ENCODE measurements at regions of chr5 and their contacts with region 1.

Region 1: DNA sequence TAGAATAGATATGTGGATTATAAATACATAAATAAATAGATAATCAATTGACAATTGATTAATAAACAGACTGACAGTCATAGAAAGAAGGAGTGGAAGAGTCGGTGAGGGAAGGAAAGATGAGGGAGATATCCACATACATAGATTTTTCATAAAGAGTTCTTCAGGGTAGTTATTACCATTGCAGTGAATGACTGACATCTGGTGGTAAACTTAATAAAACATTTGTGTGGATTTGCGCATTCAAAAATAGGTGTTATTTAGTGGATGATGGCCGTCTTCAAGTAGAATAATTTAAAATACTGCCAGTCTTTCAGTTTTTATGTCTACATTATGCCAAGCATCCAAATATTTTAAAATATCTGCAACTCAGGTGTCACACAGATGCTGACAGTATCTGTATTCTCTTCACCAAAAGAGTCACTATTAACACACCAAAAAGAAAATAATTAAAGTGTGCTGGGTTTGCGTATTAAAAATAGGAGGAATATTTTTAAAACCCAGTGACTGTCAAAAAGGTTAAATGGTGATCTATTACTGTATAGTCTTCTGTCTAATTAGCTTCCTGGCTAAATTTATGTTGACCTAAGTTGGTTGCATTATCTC is 78.8 kb downstream of the GIN1 start:
- DNase-seq: no peak
- H3K4me3 ChIP-seq: no peak overlapping the region
- H3K27ac ChIP-seq: no peak overlapping the region
- H3K4me1 ChIP-seq: no peaks in the 10 kb centered on the region
- H3K27me3 ChIP-seq: no peaks in the 10 kb centered on the region
- CTCF ChIP-seq: peak in 4 of 5 experiments; percentile 28 to 50 (median 36)
- EP300 ChIP-seq: no peak
- POLR2A ChIP-seq: no peak

Region 2: DNA sequence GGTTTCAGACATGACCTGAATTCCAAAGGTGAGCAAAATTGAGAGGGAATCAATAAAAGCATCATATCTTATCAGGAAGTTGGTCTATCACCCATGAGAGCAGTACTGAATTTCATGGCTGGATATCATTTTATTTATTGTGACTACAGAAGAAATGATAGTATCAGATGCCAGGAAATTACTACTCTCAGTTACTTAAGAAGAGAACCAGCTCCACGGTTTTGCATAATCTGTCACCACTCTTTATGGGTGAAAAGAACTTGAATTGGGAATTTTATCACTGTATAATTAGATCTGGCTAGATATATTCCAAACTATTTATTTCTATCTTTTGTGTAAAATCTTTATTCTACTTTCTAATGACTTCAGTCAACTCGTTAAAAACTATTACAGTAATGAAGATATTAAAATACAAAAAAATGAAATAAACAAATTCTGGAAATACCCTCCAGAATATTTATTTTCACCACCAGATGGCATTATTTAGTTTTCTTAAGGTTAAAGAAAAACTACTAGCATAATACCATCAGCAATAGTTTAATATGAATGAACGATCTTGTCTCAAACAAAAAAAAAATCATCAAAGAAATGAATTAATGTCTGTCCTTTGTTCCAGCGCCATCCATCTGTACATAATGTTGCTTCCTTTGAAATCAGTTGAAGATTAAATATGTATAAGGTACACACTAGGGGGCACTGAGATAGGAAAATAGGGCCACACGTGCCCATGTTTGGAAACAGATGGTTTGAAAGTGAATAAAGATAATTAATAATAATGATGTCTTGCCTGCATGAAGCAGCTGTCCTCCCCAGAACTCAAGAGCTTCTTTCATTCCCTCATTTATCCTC is 457.7 kb before region 1 on chr5:
- in situ Hi-C with region 1: loop called in 1 of 4 experiments (anchors 25 kb)
- intact Hi-C with region 1: no loop called
- DNase-seq: no peak
- H3K4me3 ChIP-seq: no peak overlapping the region
- H3K27ac ChIP-seq: no peak overlapping the region
- H3K4me1 ChIP-seq: no peaks in the 10 kb centered on the region
- H3K27me3 ChIP-seq: no peaks in the 10 kb centered on the region
- CTCF ChIP-seq: peak; percentile 35 to 52 (median 42)
- EP300 ChIP-seq: no peak
- POLR2A ChIP-seq: no peak

Region 3: DNA sequence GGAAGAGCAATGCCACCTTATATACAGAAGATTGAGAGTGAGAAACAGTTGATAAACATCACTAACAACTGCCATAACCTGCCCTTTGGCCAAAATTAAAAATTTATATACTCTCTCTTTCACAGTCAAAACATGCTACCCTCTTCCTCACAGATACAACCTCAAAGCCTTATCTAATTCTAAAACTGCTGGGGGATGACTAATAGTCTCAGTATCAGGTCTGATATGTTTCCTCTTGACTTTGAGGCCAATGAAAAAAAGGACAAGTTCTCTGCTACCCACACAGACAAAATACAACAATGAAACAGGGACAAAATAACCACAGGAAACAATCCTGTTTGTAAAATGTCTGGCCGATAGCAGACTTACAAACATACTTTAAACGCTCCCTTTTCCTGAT is 1007.1 kb after region 1 on chr5:
- in situ Hi-C with region 1: no loop called
- intact Hi-C with region 1: no loop called
- DNase-seq: no peak
- H3K4me3 ChIP-seq: no peak overlapping the region
- H3K27ac ChIP-seq: no peak overlapping the region
- H3K4me1 ChIP-seq: no peaks in the 10 kb centered on the region
- H3K27me3 ChIP-seq: no peaks in the 10 kb centered on the region
- CTCF ChIP-seq: no peak
- EP300 ChIP-seq: no peak
- POLR2A ChIP-seq: no peak